Activated T-helper 2 cell treated with anti-CD3 and anti-CD28 coated beads, Interferon-gamma antibody, Interleukin-2, Interleukin-4, amounts not matched to agents 10 μg/mL and 5 μg/mL and 100 μg/mL, durations not matched to agents 14 hours and 24 hours and 36 hours (primary cell): ENCODE measurements at regions of chr1 and their contacts with region 1.

Region 1: DNA sequence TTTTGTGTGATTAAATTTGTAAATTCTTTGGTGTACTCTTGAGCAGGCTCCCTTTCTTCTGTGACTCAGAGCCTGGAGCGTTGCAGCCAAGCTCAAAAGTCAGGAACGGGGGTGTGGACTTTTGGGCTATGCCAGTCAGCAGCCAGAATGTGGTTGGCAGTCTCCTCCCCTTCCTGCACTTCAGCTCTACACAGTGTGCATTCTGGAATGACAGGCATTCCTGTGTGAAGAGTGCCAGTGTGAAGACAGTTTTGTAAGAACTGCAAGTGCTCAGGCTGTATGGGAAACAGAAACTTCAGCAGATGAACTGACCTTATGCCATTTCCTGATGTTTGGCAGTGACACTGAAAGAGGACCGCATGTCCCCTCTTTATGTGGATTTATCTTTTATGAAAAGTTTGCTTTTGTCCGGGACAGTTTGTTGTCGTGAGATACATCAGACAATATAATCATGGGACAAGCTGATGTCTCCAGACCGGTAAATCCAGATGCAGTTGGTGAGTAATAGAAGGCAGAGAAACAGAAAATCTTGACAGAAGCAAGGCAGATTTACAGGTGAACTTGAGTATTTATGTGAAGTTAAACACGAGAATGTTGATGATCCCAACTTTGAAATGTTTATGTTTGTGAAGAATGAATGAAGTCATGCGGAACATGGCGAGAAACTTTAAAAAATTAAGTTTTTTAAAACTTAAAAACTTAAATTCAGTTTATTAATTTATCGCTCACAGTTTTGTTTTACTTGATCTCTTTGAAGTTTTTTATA is 67.7 kb upstream of the RCC1 start:
- DNase-seq: no peak
- H3K4me3 Mint-ChIP-seq: peak overlapping the region; percentile 67
- H3K27ac Mint-ChIP-seq: peak overlapping the region; percentile 74
- H3K4me1 Mint-ChIP-seq: peaks cover 27% of the 10 kb centered on the region
- H3K27me3 Mint-ChIP-seq: no peaks in the 10 kb centered on the region

Region 2: DNA sequence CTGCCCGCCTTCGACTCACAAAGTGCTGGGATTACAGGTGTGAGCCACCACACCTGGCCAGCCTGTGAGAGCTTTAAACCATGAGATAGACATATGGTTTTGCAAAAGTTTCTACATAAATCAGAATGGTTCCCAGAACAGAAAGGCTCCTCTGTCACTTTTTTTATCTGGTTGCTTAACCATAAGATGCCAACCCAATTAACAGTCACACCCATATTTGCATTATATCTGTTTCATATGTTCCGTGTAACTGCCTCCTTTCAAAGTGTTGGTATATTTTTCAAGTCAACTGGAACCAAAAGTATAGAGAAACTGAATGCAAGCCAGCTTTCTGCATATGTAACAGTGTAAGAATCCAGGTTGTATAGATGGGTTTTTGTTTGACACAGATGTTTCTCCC is 44.0 kb after region 1 on chr1:
- intact Hi-C with region 1: loop called (anchors 1 kb)
- DNase-seq: no peak
- H3K4me3 Mint-ChIP-seq: no peak overlapping the region
- H3K27ac Mint-ChIP-seq: no peak overlapping the region
- H3K4me1 Mint-ChIP-seq: no peaks in the 10 kb centered on the region
- H3K27me3 Mint-ChIP-seq: no peaks in the 10 kb centered on the region